Dorsolateral prefrontal cortex (tissue), 120 donors: ENCODE measurements at regions of chr3 and their contacts with region 1.

Region 1: DNA sequence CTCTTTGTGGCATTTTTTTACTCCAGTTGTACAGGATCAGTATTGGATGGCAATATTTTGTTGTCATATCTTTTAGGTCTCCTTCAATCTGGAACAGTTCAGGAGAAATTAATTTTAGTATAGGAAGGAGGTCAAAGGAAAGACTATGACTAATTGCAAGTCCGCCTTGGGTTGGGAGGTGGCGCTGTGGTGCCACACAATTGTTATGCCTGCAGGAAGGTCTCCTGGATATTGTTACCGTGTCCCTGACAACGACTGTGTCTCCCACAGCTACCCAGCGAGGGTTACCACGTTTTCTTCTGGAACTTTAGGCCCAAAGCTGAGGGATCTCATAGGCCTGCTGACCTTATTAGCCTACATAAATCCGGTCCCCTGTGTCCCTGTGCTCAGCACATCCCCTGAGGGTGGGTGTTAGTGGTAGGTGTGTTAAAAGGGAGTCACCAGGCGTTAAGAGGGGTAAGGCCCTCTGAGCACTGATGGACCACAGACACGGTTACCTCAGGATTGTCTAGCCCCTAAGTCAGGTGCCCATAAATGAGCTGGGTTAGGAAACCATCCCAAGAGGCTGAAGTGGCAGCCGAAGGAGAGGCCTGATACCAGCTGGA is 31.5 kb downstream of the KCNAB1 start:
- DNase-seq: peak; percentile 56 to 83 (median 75)
- H3K4me3 ChIP-seq: no peak overlapping the region
- H3K27ac ChIP-seq: peak overlapping the region in 3 of 59 donors; percentile 17 to 82 (median 37)
- H3K27me3 ChIP-seq: no peaks in the 10 kb centered on the region
- CTCF ChIP-seq: peak; percentile 38 to 87 (median 74)

Region 2: DNA sequence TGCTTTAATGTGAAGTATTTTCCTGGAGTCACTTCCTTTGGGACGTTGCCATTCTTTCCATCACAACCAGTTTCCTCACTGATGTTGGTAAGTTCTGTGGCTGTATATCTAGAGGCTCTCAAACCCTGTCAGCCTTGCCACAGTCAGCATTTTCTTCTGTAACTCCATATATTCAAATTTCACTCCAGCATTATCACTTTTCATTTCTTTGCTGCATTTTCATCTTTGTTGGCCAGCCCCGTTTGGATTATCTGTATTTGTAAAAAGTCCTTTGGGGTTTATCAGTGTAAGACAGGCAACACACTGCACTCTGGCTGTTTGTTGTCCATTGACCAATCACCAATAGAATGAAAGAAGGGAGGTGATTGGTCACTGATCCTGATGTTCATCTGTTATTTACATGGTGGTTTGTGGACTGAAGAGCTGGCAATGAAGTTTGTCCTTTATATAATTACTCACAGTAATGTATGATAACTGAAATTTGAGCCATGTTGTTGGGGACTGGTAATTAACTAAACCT is 261.2 kb before region 1 on chr3:
- intact Hi-C with region 1: no loop called
- DNase-seq: no peak
- H3K4me3 ChIP-seq: peak overlapping the region in 2 of 59 donors; percentile 3 to 24
- H3K27ac ChIP-seq: peak overlapping the region in 2 of 59 donors; percentile 3 to 22
- H3K27me3 ChIP-seq: no peaks in the 10 kb centered on the region
- CTCF ChIP-seq: no peak

Region 3: DNA sequence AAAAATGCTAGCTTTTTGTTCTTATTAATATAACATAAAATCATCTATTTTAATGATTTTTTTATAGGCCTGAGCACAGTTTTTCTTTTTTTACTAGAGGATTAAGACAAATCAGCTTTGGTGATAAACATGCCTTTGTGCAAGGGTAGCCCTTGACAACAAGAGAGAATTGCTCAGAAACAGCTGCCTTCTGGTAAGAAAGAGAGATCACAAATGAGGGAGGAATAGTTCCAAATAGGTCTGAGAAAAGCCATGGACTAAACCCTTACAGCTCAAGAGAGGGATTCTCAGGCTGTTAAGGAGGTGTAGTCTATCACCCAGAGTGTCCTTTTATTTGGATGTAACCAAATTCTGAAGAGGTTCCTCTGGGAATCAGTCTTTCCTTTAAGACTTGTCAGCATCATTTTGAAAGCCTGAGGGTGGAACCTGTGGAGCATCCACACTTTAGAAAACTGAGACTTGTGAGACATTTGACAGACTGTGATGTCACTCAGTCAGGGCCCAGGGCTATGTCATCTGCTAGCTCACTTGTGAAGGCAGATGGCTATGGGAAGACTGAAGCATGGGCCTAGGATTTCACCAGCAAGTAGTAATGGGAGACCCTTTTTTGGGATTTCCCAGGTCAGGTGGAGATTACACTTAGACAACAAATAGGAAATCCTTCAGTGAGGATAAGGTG is 134.4 kb before region 1 on chr3:
- intact Hi-C with region 1: loop called (anchors 5 to 10 kb)
- DNase-seq: no peak
- H3K4me3 ChIP-seq: no peak overlapping the region
- H3K27ac ChIP-seq: peak overlapping the region in 23 of 59 donors; percentile 0 to 57 (median 35)
- H3K27me3 ChIP-seq: no peaks in the 10 kb centered on the region
- CTCF ChIP-seq: no peak

Region 4: DNA sequence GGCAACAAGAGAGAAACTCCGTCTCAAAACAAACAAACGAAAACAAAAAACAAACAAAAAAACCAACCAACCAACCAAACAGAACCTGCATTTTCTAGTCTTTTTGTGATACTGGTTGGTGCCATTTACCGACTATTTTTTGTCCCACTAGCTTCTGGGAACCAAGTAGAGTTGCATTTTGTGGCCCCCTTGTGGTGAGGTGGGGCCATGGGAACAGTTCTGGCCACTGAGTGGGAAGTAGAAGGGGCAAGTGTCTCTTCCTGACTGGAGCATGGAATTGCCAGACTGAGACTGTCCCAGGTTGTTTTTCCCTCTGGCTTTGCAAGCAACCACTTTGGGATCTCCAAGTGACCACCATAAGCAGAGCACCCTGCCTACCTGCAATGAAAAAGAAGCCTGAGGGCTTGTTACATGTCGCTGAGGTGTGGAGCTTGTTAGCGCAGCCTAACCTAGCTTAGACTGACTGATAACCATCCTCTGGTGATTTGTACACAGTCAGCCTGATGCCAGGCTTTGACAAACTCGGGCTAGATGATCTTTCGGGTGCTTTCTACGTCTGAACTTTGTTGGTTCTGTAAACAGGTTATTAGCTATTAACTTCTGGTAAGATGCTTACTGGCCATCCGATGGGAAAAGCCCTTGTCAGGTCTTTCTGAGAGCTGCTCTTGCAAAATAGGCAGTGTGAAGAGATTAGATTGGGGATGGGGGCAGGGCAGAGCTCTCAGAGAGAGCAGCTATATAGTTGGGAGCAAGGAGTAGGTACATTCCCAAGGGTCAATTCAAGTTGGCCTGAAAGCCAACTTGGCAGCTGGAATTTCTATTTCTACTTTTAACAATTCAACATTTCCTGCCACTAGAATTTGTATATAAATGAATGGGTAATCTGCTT is 230.8 kb after region 1 on chr3:
- intact Hi-C with region 1: loop called in 1 of 2 experiments (anchors 10 kb)
- DNase-seq: no peak
- H3K4me3 ChIP-seq: no peak overlapping the region
- H3K27ac ChIP-seq: peak overlapping the region in 17 of 59 donors; percentile 3 to 53 (median 33)
- H3K27me3 ChIP-seq: no peaks in the 10 kb centered on the region
- CTCF ChIP-seq: peak in 50 of 56 donors; percentile 14 to 63 (median 38)

Region 5: GRCh38 chr3:156509189-156510174 is 357.6 kb after region 1 on chr3:
- intact Hi-C with region 1: loop called (anchors 2 to 10 kb)
- DNase-seq: no peak
- H3K4me3 ChIP-seq: no peak overlapping the region
- H3K27ac ChIP-seq: no peak overlapping the region
- H3K27me3 ChIP-seq: no peaks in the 10 kb centered on the region
- CTCF ChIP-seq: peak; percentile 39 to 92 (median 77)

Region 6: DNA sequence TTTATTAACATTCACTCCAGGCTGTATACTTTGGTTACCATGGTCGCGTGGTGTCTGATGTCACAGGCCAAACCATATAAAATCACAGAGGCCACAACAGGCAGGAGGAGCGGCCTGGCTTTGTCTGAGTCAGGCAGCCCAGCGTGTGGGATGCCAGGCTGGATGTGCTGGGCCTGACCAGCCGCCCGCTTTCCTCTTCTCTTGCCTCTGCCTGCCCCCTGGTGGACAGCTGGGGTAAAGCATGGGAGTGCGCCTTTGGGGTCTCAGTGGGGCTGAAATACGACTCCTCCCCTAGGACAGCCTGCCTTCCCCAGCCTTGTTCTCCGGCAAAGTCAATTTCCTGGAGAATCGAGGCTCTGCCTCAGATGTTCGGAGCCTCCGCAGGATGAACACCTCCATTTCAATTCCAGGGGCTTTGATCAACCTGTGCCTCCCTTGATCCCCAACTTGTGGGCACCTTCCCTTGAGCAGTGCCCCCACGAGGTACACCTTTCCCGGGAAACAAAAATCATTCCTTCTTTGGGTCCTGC is 929.8 kb after region 1 on chr3:
- intact Hi-C with region 1: loop called in 1 of 2 experiments (anchors 5 kb)
- DNase-seq: peak; percentile 90 to 93 (median 92)
- H3K4me3 ChIP-seq: peak overlapping the region in 12 of 59 donors; percentile 7 to 31 (median 16)
- H3K27ac ChIP-seq: peak overlapping the region; percentile 9 to 96 (median 86)
- H3K27me3 ChIP-seq: no peaks in the 10 kb centered on the region
- CTCF ChIP-seq: peak; percentile 89 to 100 (median 98)